Breast epithelium (tissue), 4 donors: ENCODE measurements at regions of chr5 and their contacts with region 1.

Region 1: DNA sequence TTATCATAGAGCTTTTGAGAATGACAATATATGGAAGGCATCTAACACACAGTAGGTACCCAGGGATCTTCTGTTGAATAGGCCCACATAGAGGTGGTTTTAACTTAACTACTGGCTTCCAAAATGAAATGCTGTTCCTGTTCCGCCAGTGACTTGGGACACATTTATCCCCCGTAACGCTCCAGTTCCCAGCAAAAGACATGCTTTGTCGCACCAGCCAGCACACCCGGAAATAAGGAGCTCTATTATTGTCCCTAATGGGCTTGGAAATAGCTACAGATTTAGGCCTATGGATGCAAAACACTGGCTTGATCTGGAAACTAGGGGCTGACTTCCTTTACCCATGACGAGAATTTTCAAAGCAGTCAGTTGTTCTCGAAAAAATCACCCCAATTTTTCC is 45.9 kb upstream of the C5orf58 start:
- DNase-seq: no peak
- H3K4me3 ChIP-seq: no peak overlapping the region
- H3K27ac ChIP-seq: no peak overlapping the region
- H3K4me1 ChIP-seq: no peaks in the 10 kb centered on the region
- H3K27me3 ChIP-seq: no peaks in the 10 kb centered on the region
- CTCF ChIP-seq: no peak
- POLR2A ChIP-seq: no peak

Region 2: GRCh38 chr5:170097934-170098333 is 88.9 kb before region 1 on chr5:
- intact Hi-C with region 1: loop called (anchors 1 kb)
- DNase-seq: no peak
- H3K4me3 ChIP-seq: no peak overlapping the region
- H3K27ac ChIP-seq: no peak overlapping the region
- H3K4me1 ChIP-seq: no peaks in the 10 kb centered on the region
- H3K27me3 ChIP-seq: no peaks in the 10 kb centered on the region
- CTCF ChIP-seq: no peak
- POLR2A ChIP-seq: no peak

Region 3: GRCh38 chr5:170132269-170132975 is 54.4 kb before region 1 on chr5:
- intact Hi-C with region 1: no loop called
- DNase-seq: no peak
- H3K4me3 ChIP-seq: no peak overlapping the region
- H3K27ac ChIP-seq: no peak overlapping the region
- H3K4me1 ChIP-seq: no peaks in the 10 kb centered on the region
- H3K27me3 ChIP-seq: no peaks in the 10 kb centered on the region
- CTCF ChIP-seq: no peak
- POLR2A ChIP-seq: no peak